ENCODE measurements at regions of chr10 and their contacts with region 1.

Region 1: GRCh38 chr10:125343118-125343925 is 183.0 kb upstream of the CTBP2 start:
- DNase-seq: no peak
- H3K4me3 ChIP-seq: no peak overlapping the region
- H3K27ac ChIP-seq: no peak overlapping the region
- H3K4me1 ChIP-seq: no peaks in the 10 kb centered on the region
- H3K27me3 ChIP-seq: no peaks in the 10 kb centered on the region
- CTCF ChIP-seq: peak; percentile 54 to 67 (median 60)
- EP300 ChIP-seq: no peak
- POLR2A ChIP-seq: no peak

Region 2: GRCh38 chr10:125048101-125048864 is 295.0 kb before region 1 on chr10:
- intact Hi-C with region 1: loop called (anchors 10 kb)
- DNase-seq: peak; percentile 93
- H3K4me3 ChIP-seq: peak overlapping the region in 1 of 4 donors; percentile 9
- H3K27ac ChIP-seq: peak overlapping the region; percentile 59 to 73 (median 67)
- H3K4me1 ChIP-seq: peaks cover 54 to 95% (median 63%) of the 10 kb centered on the region in 4 donors
- H3K27me3 ChIP-seq: no peaks in the 10 kb centered on the region
- CTCF ChIP-seq: peak in 2 of 3 experiments; percentile 94 to 96
- EP300 ChIP-seq: no peak
- POLR2A ChIP-seq: no peak

Region 3: DNA sequence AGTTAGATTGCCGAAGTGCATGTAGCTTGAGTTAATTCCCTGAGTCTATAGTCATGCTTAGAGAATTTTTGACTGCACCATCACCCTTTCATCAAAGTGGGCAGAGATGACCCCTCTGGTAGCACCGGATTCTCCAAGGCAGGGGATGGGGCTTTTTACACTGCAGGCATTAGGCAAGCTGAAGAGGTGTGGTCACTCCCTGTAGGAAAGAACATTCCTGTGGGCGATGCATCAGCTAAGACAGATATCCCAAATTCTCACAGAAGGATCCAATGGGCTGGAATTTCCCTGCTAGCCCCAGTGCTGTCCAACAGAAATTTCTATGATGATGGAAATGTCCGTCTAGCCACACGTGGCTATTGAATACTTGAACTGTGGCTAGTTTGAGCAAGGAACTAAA is 926.8 kb after region 1 on chr10:
- intact Hi-C with region 1: no loop called
- DNase-seq: no peak
- H3K4me3 ChIP-seq: no peak overlapping the region
- H3K27ac ChIP-seq: no peak overlapping the region
- H3K4me1 ChIP-seq: no peaks in the 10 kb centered on the region
- H3K27me3 ChIP-seq: no peaks in the 10 kb centered on the region
- CTCF ChIP-seq: no peak
- EP300 ChIP-seq: no peak
- POLR2A ChIP-seq: no peak